ENCODE measurements at regions of chr11 and their contacts with region 1.

Region 1: DNA sequence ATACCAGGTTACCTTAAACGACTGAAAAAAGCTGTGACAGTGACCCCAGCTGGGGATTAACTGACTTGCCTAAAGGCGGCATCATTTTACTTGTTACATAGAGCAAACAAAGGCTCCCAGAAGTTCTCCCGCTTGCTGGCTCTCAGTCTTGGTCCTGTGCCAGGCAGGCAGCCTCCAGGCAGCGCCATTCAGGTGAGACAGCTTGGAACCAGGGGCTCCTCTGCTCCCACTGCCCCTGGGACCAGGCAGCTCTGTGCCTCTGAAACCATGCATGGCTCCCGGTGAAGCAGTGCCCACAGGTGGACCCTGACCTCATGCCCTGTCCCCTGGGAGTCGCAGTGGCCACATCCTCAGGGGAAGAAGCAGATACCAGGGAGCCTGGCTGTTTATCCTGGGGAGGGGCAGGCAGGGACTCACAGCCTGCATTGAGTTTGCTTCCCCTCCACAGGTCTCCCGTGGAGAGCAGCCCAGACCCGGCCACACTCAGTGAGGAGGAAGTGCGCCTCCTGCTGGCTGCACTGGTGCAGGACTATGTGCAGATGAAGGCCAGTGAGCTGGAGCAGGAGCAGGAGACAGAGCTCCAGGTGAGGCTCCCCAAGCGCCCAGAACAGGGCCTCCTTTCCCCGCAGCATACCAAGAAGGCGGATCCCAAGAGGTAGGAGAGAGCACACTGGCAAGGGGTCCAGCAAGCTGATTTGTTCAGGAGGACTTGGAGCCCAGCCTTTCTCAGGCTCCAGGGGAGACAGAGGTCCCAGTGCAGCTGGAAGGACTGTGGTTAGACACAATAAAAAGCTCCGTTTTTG is 15.6 kb upstream of the CYP2R1 start:
- DNase-seq: peak; percentile 73
- ATAC-seq: peak; percentile 47
- H3K4me3 Mint-ChIP-seq: no peak overlapping the region
- H3K27ac Mint-ChIP-seq: no peak overlapping the region
- H3K4me1 Mint-ChIP-seq: peaks cover 45% of the 10 kb centered on the region
- H3K27me3 Mint-ChIP-seq: peaks cover 2% of the 10 kb centered on the region
- CTCF ChIP-seq: no peak

Region 2: DNA sequence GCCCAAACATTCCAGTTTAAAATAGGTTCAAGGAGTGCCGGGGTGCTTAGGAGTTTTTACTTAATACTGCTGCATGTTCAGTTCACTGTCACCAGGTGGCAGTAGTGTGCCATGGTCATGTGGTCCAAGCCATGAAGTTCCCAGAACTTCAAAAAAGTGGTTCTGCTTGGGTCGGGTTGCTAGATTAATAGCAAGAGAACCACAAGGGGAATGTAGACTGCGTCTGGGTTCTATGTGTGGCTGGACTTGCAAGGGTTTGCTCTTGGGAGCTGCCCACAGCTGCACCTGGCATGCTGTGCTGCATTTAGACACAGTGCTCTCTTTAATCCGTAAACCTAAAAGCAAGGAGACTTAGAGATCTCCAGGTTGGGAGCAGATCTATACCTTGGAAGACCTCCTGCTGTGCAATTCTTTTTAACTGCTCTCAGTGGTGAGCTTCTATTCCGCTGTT is 951.6 kb before region 1 on chr11:
- CTCF ChIA-PET with region 1: no interaction called
- POLR2A ChIA-PET with region 1: no interaction called
- intact Hi-C with region 1: loop called (anchors 5 kb)
- DNase-seq: no peak
- ATAC-seq: peak; percentile 65
- H3K4me3 Mint-ChIP-seq: no peak overlapping the region
- H3K27ac Mint-ChIP-seq: no peak overlapping the region
- H3K4me1 Mint-ChIP-seq: no peaks in the 10 kb centered on the region
- H3K27me3 Mint-ChIP-seq: peaks cover 25% of the 10 kb centered on the region
- CTCF ChIP-seq: peak; percentile 16

Region 3: GRCh38 chr11:14386895-14387480 is 520.6 kb before region 1 on chr11:
- CTCF ChIA-PET with region 1: no interaction called
- POLR2A ChIA-PET with region 1: no interaction called
- intact Hi-C with region 1: no loop called
- DNase-seq: no peak
- ATAC-seq: no peak
- H3K4me3 Mint-ChIP-seq: no peak overlapping the region
- H3K27ac Mint-ChIP-seq: no peak overlapping the region
- H3K4me1 Mint-ChIP-seq: no peaks in the 10 kb centered on the region
- H3K27me3 Mint-ChIP-seq: peaks cover 3% of the 10 kb centered on the region
- CTCF ChIP-seq: no peak

Region 4: DNA sequence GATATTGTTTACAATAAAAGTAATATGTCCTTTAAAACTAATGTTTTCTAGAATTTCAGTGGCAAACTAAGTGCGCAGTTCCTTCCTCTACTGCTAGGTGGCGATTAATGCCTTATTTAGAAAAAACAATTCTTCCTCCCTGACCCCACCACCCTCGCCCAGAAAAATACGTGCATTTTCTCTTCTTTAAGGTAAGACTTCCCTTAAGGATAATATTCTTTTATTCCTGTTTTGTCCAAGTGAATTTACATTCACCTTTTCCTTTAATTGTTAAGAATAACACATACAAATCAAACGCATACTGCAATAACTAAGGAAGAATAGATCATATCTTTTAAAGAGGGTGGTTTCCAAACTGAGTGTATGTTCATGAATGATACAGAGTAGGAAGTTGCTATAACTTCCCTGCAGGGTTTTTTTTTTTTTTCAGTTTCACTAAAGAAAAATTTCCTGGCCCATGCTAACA is 370.4 kb before region 1 on chr11:
- CTCF ChIA-PET with region 1: interaction called, 32 read pairs
- POLR2A ChIA-PET with region 1: no interaction called
- intact Hi-C with region 1: loop called (anchors 1 kb)
- DNase-seq: no peak
- ATAC-seq: peak; percentile 88
- H3K4me3 Mint-ChIP-seq: peak overlapping the region; percentile 80
- H3K27ac Mint-ChIP-seq: peak overlapping the region; percentile 81
- H3K4me1 Mint-ChIP-seq: peaks cover 9% of the 10 kb centered on the region
- H3K27me3 Mint-ChIP-seq: no peaks in the 10 kb centered on the region
- CTCF ChIP-seq: peak; percentile 86

Region 5: GRCh38 chr11:14789879-14790484 is 117.6 kb before region 1 on chr11:
- CTCF ChIA-PET with region 1: interaction called, 202 read pairs
- POLR2A ChIA-PET with region 1: interaction called, 7 read pairs
- intact Hi-C with region 1: loop called (anchors 1 kb)
- DNase-seq: no peak
- ATAC-seq: no peak
- H3K4me3 Mint-ChIP-seq: no peak overlapping the region
- H3K27ac Mint-ChIP-seq: no peak overlapping the region
- H3K4me1 Mint-ChIP-seq: no peaks in the 10 kb centered on the region
- H3K27me3 Mint-ChIP-seq: no peaks in the 10 kb centered on the region
- CTCF ChIP-seq: peak; percentile 33

Region 6: GRCh38 chr11:14872032-14872431 is 35.6 kb before region 1 on chr11:
- CTCF ChIA-PET with region 1: no interaction called
- POLR2A ChIA-PET with region 1: no interaction called
- intact Hi-C with region 1: no loop called
- DNase-seq: no peak
- ATAC-seq: no peak
- H3K4me3 Mint-ChIP-seq: no peak overlapping the region
- H3K27ac Mint-ChIP-seq: no peak overlapping the region
- H3K4me1 Mint-ChIP-seq: no peaks in the 10 kb centered on the region
- H3K27me3 Mint-ChIP-seq: no peaks in the 10 kb centered on the region
- CTCF ChIP-seq: no peak

Region 7: DNA sequence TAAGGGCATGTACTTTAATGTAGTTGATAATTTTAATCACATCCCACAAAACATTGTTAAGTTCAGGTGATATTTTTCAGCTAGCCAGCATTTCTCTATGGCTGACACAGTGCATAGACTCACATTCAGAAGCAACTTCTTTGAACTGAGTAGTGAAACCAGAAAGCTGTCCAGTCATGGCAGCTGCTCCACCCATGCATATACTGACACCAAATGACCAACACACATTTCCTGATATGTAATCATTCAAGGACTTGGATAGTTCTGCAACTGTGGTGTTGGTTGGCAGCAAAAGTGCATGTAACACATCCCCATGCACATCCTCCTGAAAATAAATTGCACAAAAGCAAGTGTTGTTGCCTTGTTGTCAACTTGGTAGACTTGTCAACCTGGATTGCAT is 24.8 kb after region 1 on chr11:
- CTCF ChIA-PET with region 1: no interaction called
- POLR2A ChIA-PET with region 1: no interaction called
- intact Hi-C with region 1: no loop called
- DNase-seq: no peak
- ATAC-seq: no peak
- H3K4me3 Mint-ChIP-seq: no peak overlapping the region
- H3K27ac Mint-ChIP-seq: no peak overlapping the region
- H3K4me1 Mint-ChIP-seq: no peaks in the 10 kb centered on the region
- H3K27me3 Mint-ChIP-seq: peaks cover 6% of the 10 kb centered on the region
- CTCF ChIP-seq: no peak

Region 8: DNA sequence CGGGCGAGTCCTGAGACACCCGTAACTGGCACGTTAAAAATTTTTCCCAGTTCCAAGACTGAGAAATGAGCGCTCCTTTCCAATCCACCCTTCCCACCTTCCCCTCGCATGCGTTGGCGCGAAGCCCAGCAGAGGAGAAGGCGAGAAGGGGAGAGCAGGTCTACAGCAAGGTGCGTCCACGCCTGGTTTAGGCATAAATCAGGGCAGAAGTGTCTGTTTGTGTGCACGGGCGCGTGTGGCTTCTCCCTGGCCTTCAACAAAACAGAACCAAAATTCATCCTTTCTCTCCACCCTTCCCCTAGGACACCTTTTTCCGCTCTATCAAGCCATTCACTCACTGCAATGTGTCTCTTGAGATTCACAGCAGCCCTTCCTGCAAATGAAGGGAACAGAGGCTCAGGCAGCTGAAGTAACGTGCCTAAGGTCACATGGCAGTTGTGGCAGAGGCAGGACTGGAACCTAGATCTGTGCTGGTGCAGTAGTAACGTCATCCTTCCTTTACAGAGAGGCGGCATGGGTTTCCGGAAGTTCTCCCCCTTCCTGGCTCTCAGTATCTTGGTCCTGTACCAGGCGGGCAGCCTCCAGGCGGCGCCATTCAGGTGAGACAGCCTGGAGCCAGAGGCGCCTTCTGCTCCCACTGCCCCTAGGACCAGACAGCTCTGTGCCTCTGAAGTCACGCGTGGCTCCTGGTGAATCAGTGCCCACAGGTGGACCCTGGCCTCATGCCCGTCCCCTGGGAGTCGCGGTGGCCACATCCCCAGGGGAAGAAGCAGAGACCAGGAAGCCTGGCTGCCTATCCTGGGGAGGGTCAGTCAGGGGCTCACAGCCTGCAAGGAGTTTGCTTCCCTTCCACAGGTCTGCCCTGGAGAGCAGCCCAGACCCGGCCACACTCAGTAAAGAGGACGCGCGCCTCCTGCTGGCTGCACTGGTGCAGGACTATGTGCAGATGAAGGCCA is 166.9 kb after region 1 on chr11:
- CTCF ChIA-PET with region 1: interaction called, 74 read pairs
- POLR2A ChIA-PET with region 1: interaction called, 3 read pairs
- intact Hi-C with region 1: loop called (anchors 1 kb)
- DNase-seq: peak; percentile 67
- ATAC-seq: peak; percentile 89
- H3K4me3 Mint-ChIP-seq: peak overlapping the region; percentile 61
- H3K27ac Mint-ChIP-seq: no peak overlapping the region
- H3K4me1 Mint-ChIP-seq: peaks cover 18% of the 10 kb centered on the region
- H3K27me3 Mint-ChIP-seq: peaks cover 34% of the 10 kb centered on the region
- CTCF ChIP-seq: peak; percentile 35

Region 9: GRCh38 chr11:16605894-16606783 is 1698.5 kb after region 1 on chr11:
- CTCF ChIA-PET with region 1: no interaction called
- POLR2A ChIA-PET with region 1: no interaction called
- intact Hi-C with region 1: loop called (anchors 5 kb)
- DNase-seq: peak; percentile 62
- ATAC-seq: peak; percentile 88
- H3K4me3 Mint-ChIP-seq: peak overlapping the region; percentile 75
- H3K27ac Mint-ChIP-seq: peak overlapping the region; percentile 63
- H3K4me1 Mint-ChIP-seq: peaks cover 30% of the 10 kb centered on the region
- H3K27me3 Mint-ChIP-seq: peaks cover 40% of the 10 kb centered on the region
- CTCF ChIP-seq: no peak

Measured in activated B cell treated with CpG ODN at 0.5 μM for 24 hours (primary cell).